MCF 10A (cell line): ENCODE measurements at regions of chr4 and their contacts with region 1.

Region 1: DNA sequence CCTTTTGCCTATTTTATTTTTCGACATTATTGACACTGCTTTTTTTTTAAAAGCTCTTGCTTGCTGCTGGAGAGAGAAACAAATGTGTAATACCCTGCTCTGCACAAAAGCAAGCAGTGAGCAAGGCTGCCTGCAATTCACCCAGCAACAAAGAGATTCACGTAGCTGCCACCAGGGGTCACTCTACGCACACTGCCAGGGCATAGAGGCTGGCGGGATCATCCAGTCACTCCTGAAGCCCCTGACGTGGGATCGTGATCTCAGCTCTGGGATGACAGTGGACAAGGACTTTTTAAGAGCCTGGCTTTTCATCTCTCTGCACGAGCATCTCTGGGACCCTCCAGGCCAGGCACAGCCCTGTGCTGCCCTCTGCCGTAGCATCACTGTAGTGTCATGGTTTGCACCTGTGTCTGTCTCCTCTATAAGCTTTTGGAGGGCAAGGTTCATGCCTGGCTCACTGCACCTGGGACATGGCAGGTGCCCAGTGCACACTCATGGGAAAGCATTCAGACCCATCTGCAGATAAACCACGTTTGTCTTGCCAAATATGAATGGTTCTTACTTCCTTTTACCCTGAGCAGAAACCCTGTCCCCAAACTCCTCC is 19.8 kb downstream of the C4orf50 start:
- DNase-seq: peak; percentile 70
- H3K4me3 Mint-ChIP-seq: no peak overlapping the region
- H3K27ac Mint-ChIP-seq: no peak overlapping the region
- H3K4me1 Mint-ChIP-seq: no peaks in the 10 kb centered on the region
- H3K27me3 Mint-ChIP-seq: no peaks in the 10 kb centered on the region
- CTCF ChIP-seq: peak; percentile 51

Region 2: DNA sequence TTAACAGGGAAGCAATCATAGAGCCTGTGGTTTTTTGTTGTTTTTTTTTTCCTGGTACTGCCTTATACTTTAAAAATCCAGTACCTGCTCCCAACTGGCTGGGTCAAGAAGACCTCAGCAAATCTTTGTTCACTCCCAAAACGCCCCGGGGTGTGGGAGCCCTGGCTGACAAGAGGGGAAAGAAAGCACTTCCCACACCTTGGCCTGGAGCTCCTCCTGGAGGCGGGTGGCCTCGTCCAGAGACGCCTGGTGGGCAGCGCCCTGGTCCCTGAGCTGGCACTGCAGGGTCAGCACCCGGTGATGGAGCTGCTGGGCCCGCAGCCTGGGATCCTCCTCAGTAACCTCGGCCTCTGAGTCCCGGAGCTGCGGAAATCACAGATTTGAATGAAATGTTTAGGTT is 18.5 kb before region 1 on chr4:
- CTCF ChIA-PET with region 1: interaction called, 22 read pairs
- POLR2A ChIA-PET with region 1: no interaction called
- intact Hi-C with region 1: no loop called
- DNase-seq: peak; percentile 33
- H3K4me3 Mint-ChIP-seq: no peak overlapping the region
- H3K27ac Mint-ChIP-seq: no peak overlapping the region
- H3K4me1 Mint-ChIP-seq: no peaks in the 10 kb centered on the region
- H3K27me3 Mint-ChIP-seq: no peaks in the 10 kb centered on the region
- CTCF ChIP-seq: no peak

Region 3: DNA sequence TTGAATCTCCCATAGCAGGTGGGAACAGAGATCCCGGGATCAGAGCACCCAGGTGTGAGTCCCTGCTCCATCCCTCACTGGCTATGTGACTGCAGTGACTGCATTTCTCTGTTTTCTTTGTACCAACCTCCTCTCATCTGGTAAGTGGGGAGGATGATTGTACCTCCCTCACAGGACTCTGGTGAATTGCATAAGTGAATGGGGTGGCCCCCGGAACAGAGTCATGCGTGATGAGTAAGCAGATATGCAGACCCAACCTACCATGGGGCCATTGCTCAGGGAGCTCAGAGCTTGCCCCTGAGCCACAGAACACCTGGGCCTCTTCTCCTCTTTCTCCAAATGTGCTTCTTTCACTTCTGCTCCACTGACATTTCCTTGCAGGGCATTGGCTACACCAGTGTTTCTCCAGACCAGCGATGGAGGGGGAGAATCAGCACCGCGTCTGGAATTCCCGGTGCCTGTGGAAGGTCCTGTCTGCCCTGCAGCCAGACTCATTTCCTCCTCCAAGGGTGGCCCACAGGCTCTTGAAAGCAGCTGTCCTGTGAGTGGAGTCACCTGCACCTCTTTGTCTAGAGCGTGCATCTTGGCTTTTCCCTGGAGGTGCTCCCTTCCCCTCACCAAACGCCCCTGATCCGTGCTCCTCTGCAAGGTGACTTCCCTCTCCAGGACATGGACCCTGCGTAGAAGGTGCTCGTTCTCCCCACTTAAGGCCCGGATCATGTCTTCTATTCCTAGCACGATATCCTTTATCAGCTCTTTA is 10.2 kb before region 1 on chr4:
- CTCF ChIA-PET with region 1: interaction called, 50 read pairs
- POLR2A ChIA-PET with region 1: interaction called, 3 read pairs
- intact Hi-C with region 1: no loop called
- DNase-seq: no peak
- H3K4me3 Mint-ChIP-seq: no peak overlapping the region
- H3K27ac Mint-ChIP-seq: no peak overlapping the region
- H3K4me1 Mint-ChIP-seq: no peaks in the 10 kb centered on the region
- H3K27me3 Mint-ChIP-seq: no peaks in the 10 kb centered on the region
- CTCF ChIP-seq: no peak

Region 4: GRCh38 chr4:6011686-6012085 is 13.3 kb after region 1 on chr4:
- CTCF ChIA-PET with region 1: interaction called, 41 read pairs
- POLR2A ChIA-PET with region 1: no interaction called
- intact Hi-C with region 1: no loop called
- DNase-seq: peak; percentile 27
- H3K4me3 Mint-ChIP-seq: no peak overlapping the region
- H3K27ac Mint-ChIP-seq: no peak overlapping the region
- H3K4me1 Mint-ChIP-seq: no peaks in the 10 kb centered on the region
- H3K27me3 Mint-ChIP-seq: no peaks in the 10 kb centered on the region
- CTCF ChIP-seq: no peak

Region 5: DNA sequence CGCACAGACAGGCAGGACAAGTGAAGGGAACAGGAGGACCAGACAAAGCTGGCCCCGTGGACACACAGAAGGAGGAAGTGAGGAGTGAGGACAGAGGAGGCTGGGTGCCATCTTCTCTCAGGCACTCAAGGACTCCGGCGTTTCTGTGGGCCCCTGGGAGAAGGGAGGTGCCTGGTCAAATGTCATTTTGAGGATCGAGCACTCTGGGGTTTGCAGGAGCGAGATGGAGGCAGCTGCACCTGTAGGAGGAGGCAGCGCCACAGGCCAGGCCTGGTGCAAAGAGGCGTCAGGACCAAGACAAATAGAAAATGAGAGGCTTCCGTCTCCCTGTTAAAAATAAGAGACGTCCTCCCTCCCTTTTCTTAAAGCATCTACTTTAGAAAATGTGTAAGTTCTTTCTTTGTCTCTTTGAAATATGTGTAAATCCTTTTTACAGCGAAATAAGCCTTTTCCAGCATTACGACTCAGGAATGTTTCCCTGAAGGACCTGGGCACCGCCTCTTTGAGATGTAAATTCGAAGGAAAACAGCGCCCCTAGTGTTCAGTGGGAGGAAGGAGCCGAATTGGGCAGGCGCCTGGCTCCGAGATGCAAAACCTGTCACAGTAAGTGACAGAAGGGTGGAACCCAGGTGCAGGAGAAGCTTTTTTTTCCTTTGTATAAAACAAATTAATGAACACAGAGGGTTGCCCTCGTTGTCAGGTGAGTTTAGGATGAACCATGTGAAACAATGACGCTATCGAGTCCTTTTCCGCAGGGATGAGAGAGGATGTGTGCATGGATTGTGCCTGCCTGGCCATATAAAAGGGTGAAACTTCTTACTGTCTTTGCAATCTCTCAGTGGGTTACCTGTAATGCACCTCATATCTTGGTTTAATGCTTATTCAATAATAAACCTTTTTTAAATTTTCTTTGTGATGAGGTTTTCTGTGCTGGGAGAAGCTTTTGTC is 21.2 kb after region 1 on chr4:
- CTCF ChIA-PET with region 1: interaction called, 41 read pairs
- POLR2A ChIA-PET with region 1: no interaction called
- intact Hi-C with region 1: no loop called
- DNase-seq: peak; percentile 59
- H3K4me3 Mint-ChIP-seq: no peak overlapping the region
- H3K27ac Mint-ChIP-seq: no peak overlapping the region
- H3K4me1 Mint-ChIP-seq: no peaks in the 10 kb centered on the region
- H3K27me3 Mint-ChIP-seq: no peaks in the 10 kb centered on the region
- CTCF ChIP-seq: peak; percentile 44

Region 6: DNA sequence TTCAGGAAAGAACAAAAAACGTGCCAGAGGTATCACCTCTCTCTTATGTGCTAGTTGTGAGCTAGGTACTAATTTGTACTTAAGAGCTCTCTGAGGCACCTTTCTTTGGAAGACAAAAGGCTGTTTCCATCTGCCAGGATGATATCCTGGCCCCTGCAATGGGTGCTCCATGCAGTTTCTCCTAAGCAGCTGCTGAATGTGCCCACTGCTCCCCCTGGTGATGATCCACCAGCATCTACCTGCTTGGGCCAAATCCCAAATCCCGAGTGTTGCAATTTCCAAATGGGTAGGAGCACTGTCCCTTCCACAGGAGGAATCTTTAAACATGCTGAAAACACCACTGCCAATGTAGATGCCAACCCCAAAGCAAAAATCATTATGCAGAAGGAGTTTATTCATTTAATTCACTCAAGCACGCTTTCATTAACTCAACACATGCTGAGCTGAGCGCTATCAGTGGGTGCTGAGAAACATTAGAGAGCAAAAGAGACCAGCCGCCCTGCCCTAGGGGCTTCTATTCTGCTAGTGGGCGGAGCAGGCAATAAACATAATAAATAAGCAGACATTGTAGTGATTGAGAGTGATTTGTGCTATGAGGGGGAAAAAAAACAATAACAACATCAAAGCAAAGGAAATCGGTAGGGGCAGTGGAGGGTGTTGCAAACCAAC is 89.4 kb after region 1 on chr4:
- CTCF ChIA-PET with region 1: interaction called, 40 read pairs
- POLR2A ChIA-PET with region 1: no interaction called
- intact Hi-C with region 1: no loop called
- DNase-seq: peak; percentile 55
- H3K4me3 Mint-ChIP-seq: no peak overlapping the region
- H3K27ac Mint-ChIP-seq: no peak overlapping the region
- H3K4me1 Mint-ChIP-seq: no peaks in the 10 kb centered on the region
- H3K27me3 Mint-ChIP-seq: no peaks in the 10 kb centered on the region
- CTCF ChIP-seq: no peak

Region 7: DNA sequence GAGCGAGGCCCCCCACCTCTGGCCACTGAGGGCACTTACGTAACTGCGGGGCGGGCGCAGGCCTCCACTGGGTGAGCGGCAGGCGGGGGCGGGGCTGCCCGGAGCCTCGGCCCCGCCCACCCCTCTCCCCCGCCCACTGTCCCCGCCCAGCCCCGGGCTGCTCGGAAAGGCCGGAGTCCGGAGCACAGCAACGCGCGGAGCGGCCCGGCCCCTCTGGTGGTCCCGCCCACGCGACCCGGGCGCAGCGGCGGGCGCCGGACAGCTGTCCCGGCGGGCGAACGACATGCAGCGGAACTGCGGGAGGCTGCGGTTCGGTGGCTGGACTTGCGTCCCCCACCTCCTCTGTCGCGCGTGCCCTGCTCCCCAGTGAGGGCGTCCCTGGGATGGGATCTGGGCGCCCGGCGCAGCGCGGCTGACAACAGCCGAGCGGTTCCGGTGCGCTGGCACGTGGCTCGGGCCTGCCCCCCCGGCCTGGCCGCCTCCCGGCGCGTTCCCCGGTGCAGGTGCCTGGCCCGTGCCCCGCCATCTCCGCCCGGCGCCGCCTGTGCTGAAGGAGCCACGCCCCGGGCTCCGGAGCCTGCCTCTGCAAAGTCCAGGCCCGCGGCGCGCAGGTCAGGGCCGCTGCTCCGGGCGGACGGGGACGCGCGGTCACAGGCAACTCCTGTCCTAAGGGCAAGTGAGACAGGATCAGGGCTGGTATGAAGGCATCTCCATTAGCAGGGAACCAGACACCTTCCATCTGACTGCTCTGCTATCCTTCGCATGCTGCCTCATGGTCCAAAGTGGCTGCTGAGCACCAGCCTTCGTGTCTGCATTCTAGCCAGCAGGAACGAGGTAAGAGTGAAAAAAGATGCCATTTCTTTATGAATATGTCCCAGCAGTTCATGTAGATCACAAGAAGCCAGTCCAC is 223.7 kb after region 1 on chr4:
- CTCF ChIA-PET with region 1: no interaction called
- POLR2A ChIA-PET with region 1: no interaction called
- intact Hi-C with region 1: no loop called
- DNase-seq: no peak
- H3K4me3 Mint-ChIP-seq: no peak overlapping the region
- H3K27ac Mint-ChIP-seq: no peak overlapping the region
- H3K4me1 Mint-ChIP-seq: no peaks in the 10 kb centered on the region
- H3K27me3 Mint-ChIP-seq: peaks cover 10% of the 10 kb centered on the region
- CTCF ChIP-seq: no peak

Region 8: GRCh38 chr4:6616087-6616995 is 617.9 kb after region 1 on chr4:
- CTCF ChIA-PET with region 1: no interaction called
- POLR2A ChIA-PET with region 1: no interaction called
- intact Hi-C with region 1: no loop called
- DNase-seq: no peak
- H3K4me3 Mint-ChIP-seq: no peak overlapping the region
- H3K27ac Mint-ChIP-seq: no peak overlapping the region
- H3K4me1 Mint-ChIP-seq: no peaks in the 10 kb centered on the region
- H3K27me3 Mint-ChIP-seq: no peaks in the 10 kb centered on the region
- CTCF ChIP-seq: no peak

Region 9: GRCh38 chr4:6647582-6648230 is 649.3 kb after region 1 on chr4:
- CTCF ChIA-PET with region 1: no interaction called
- POLR2A ChIA-PET with region 1: no interaction called
- intact Hi-C with region 1: no loop called
- DNase-seq: no peak
- H3K4me3 Mint-ChIP-seq: no peak overlapping the region
- H3K27ac Mint-ChIP-seq: no peak overlapping the region
- H3K4me1 Mint-ChIP-seq: peaks cover 9% of the 10 kb centered on the region
- H3K27me3 Mint-ChIP-seq: no peaks in the 10 kb centered on the region
- CTCF ChIP-seq: no peak